Common myeloid progenitor, CD34-positive (primary cell): ENCODE measurements at regions of chr11 and their contacts with region 1.

Region 1: DNA sequence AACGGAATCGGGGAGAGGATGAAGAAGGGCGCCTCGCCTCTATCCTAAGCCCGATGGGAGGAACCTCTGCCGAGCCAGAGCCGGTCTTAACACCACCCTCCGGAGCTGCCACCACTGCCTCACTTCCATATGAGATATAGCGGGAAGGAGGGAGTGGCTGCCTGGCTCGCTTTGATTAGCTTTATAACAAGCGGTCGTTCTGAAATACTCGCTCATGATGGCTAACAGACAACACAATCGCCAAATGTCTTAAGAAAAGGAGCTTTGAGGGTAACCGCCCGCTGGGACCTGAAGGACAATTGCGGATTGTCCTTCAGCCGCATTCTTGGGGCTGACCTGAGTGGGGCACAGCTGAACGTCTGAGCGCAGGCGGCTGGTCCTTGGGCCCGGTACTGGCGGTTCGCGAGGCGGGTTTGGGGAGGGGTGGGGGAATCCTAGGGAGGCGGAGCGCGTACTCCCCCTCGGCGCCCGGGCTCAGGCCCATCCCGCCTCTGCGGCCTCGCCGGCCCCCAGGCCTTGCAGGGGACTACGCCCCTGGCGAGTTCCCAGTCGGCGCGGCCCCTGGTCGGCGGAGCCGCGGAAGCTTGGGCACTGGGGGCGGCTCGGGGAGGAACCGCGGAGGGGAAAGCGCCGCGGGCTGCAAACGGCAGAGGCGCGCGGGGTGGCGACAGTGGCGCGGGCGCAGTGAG is at the start of gene PLAAT5:
- DNase-seq: peak in 2 of 3 donors; percentile 49 to 69
- H3K4me3 ChIP-seq: peak within 1 kb of the TSS; percentile 36 to 78 (median 65)
- H3K27ac ChIP-seq: peak within 1 kb of the TSS in 1 of 2 experiments; percentile 35
- H3K4me1 ChIP-seq: peaks cover 11 to 25% (median 16%) of the 10 kb centered on the region in 4 experiments
- H3K27me3 ChIP-seq: peaks cover 0 to 20% (median 13%) of the 10 kb centered on the region in 5 experiments

Region 2: DNA sequence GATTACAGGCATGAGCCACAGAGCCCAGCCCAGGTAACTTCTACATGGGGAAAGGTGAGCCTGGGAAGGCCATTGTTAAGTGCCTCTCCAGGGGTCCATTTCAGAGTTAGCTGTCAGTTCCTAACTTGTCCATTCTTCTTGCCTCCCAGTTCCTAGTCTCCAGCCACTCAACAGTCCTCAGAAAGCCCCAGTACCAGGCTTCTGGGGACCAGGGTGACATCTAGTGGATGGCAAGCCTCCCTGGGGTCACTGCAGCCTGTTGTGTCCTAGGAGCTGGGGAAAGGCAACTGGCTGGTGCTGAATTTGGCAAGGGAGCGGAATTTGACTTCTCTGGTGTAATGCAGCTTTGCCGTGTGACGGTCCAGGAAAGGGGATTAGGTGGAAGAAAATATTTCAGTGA is 17.3 kb after region 1 on chr11:
- CTCF ChIA-PET with region 1: interaction called, 40 read pairs
- POLR2A ChIA-PET with region 1: interaction called, 6 read pairs
- DNase-seq: peak; percentile 60 to 64 (median 63)
- H3K4me3 ChIP-seq: no peak overlapping the region
- H3K27ac ChIP-seq: no peak overlapping the region
- H3K4me1 ChIP-seq: peaks cover 15 to 64% (median 56%) of the 10 kb centered on the region in 4 experiments
- H3K27me3 ChIP-seq: peaks cover 0 to 3% (median 0%) of the 10 kb centered on the region in 5 experiments